ENCODE measurements at regions of chr1 and their contacts with region 1.

Region 1: GRCh38 chr1:194295685-194296084 is 1109.3 kb upstream of the B3GALT2 start:
- DNase-seq: peak; percentile 33
- ATAC-seq: peak; percentile 92
- H3K4me3 ChIP-seq: no peak overlapping the region
- H3K27ac ChIP-seq: no peak overlapping the region
- H3K4me1 ChIP-seq: peaks cover 0 to 4% of the 10 kb centered on the region in 2 experiments; a peak in 1 of 4 replicates
- H3K27me3 ChIP-seq: no peaks in the 10 kb centered on the region
- CTCF ChIP-seq: peak; percentile 29 to 64 (median 57); a peak in 5 of 6 replicates
- POLR2A ChIP-seq: no peak
- RAD21 ChIP-seq: peak; percentile 77

Region 2: GRCh38 chr1:193143285-193143684 is 1152.4 kb before region 1 on chr1:
- CTCF ChIA-PET with region 1: no interaction called
- POLR2A ChIA-PET with region 1: no interaction called
- RAD21 ChIA-PET with region 1: no interaction called
- intact Hi-C with region 1: loop called (anchors 5 kb)
- DNase-seq: no peak
- ATAC-seq: 0 out of 2 replicates have a peak, but pooled peaks have one; percentile 46
- H3K4me3 ChIP-seq: no peak overlapping the region
- H3K27ac ChIP-seq: no peak overlapping the region
- H3K4me1 ChIP-seq: no peaks in the 10 kb centered on the region
- H3K27me3 ChIP-seq: no peaks in the 10 kb centered on the region
- CTCF ChIP-seq: peak; percentile 22 to 46 (median 26); a peak in 2 of 6 replicates
- POLR2A ChIP-seq: no peak
- RAD21 ChIP-seq: peak; percentile 59

Region 3: GRCh38 chr1:193183019-193183627 is 1112.6 kb before region 1 on chr1:
- CTCF ChIA-PET with region 1: no interaction called
- POLR2A ChIA-PET with region 1: no interaction called
- RAD21 ChIA-PET with region 1: no interaction called
- intact Hi-C with region 1: loop called (anchors 2 kb)
- DNase-seq: peak; percentile 51
- ATAC-seq: peak; percentile 72
- H3K4me3 ChIP-seq: no peak overlapping the region
- H3K27ac ChIP-seq: no peak overlapping the region
- H3K4me1 ChIP-seq: no peaks in the 10 kb centered on the region
- H3K27me3 ChIP-seq: no peaks in the 10 kb centered on the region
- CTCF ChIP-seq: peak; percentile 54 to 87 (median 78)
- POLR2A ChIP-seq: no peak
- RAD21 ChIP-seq: peak; percentile 71

Region 4: DNA sequence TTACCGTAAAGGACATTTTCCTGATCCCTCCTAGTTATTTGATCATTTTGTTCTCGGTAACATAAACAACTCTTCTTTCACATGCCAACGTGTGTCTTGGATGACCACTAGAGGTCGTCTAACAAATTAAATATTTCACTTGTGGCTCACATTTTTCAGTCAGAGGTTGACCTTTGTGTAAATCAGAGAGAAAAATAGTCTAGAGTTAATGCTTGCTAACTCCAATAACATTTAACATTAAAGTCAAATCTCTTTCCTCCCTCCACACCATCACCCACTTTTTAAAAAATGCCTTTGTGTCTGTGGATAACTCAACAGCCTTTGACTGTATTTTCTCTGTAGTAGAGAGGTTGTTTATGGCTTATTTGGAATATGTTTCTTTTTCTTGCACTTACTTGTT is 888.8 kb before region 1 on chr1:
- CTCF ChIA-PET with region 1: no interaction called
- POLR2A ChIA-PET with region 1: no interaction called
- RAD21 ChIA-PET with region 1: no interaction called
- intact Hi-C with region 1: loop called (anchors 2 kb)
- DNase-seq: peak; percentile 19
- ATAC-seq: peak; percentile 74
- H3K4me3 ChIP-seq: no peak overlapping the region
- H3K27ac ChIP-seq: no peak overlapping the region
- H3K4me1 ChIP-seq: no peaks in the 10 kb centered on the region
- H3K27me3 ChIP-seq: no peaks in the 10 kb centered on the region
- CTCF ChIP-seq: peak; percentile 47 to 77 (median 65); a peak in 5 of 6 replicates
- POLR2A ChIP-seq: no peak
- RAD21 ChIP-seq: peak; percentile 65

Measured in HCT116 (cell line).